Right cardiac atrium (tissue), 5 donors: ENCODE measurements at regions of chr17 and their contacts with region 1.

Region 1: DNA sequence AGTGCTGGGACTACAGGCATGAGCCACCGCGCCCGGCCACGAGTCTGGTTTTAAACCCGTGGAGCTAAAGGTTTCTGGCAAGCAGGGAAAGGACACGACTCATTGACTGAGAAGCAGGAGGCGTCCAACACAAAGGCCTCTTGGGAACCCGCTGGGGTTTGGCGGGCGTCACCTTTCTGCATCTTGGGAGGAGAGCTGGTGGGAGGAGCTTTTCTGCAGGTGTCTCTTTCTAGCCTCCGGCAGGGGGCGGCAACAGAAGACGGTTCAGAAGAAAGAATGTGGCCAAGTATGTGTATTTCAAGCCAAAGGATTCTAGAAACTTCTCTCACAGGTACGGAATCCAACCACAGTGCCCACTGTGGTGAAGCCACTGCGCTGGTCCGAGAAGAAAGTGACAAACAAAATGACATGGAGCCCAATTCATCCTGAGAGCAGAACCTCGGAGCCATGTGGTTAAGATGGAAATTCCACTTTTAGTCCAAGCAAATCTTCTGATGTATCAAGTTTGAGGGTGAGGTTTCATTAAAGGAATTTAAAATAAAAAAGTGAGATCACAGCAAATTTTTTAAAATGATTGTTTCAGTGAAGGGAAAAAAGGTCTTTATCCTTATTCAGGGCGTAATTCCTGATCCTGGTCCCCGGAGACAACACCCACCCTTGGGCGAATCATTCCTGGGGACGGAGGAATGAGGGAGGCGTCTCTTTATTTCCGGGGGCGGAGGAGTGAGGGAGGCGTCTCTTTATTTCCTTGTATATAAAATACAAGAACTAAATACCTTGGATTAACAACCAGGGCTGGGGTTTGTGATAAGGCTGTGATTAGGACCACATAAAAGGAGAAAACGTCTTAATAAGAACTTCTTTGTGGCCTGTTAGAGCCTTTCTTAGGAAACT is 97.6 kb downstream of the MRM3 start:
- DNase-seq: peak; percentile 84 to 92 (median 90)
- ATAC-seq: peak; percentile 63 to 76
- H3K4me3 ChIP-seq: no peak overlapping the region
- H3K27ac ChIP-seq: peak overlapping the region; percentile 34
- H3K4me1 ChIP-seq: peaks cover 18% of the 10 kb centered on the region
- H3K27me3 ChIP-seq: no peaks in the 10 kb centered on the region

Region 2: DNA sequence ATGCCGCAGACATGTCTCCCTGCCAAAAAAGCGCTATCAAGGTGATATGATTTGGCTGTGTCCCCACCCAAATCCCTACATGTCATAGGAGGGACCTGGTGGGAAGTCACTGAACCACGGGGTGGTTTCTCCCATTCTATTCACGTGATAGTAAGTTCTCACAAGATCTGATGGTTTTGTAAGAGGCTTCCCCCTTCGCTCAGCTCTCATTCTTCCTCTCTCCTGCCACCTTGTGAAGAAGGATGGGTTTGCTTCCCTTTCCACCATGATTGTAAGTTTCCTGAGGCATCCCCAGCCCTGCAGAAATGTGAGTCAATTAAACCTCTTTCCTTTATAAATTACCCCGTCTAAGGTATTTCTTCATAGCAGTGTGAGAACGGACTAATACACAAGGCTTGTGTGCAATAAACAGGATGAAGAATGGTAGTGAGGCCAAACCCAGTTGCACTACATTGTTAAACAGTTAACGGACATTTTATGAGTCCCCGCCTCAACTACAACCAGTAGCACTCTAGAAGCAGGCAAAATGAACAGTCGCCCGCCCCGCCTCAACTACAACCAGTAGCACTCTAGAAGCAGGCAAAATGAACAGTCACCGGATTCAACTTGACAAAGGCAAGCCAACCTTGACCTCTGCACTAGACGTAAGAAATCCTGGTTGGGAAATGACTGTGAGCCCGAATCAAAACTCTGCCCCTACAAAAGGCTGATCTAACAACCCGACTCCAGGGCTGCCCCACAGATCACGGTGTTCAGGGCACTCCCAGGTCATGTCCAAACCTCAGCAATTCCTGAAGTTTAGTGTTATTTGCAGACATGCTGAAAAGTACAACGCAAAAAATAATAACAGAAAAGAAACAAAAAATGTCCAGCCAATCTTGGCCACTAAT is 191.5 kb before region 1 on chr17:
- intact Hi-C with region 1: no loop called
- DNase-seq: no peak
- ATAC-seq: peak; percentile 42 to 47
- H3K4me3 ChIP-seq: no peak overlapping the region
- H3K27ac ChIP-seq: no peak overlapping the region
- H3K4me1 ChIP-seq: no peaks in the 10 kb centered on the region
- H3K27me3 ChIP-seq: no peaks in the 10 kb centered on the region

Region 3: DNA sequence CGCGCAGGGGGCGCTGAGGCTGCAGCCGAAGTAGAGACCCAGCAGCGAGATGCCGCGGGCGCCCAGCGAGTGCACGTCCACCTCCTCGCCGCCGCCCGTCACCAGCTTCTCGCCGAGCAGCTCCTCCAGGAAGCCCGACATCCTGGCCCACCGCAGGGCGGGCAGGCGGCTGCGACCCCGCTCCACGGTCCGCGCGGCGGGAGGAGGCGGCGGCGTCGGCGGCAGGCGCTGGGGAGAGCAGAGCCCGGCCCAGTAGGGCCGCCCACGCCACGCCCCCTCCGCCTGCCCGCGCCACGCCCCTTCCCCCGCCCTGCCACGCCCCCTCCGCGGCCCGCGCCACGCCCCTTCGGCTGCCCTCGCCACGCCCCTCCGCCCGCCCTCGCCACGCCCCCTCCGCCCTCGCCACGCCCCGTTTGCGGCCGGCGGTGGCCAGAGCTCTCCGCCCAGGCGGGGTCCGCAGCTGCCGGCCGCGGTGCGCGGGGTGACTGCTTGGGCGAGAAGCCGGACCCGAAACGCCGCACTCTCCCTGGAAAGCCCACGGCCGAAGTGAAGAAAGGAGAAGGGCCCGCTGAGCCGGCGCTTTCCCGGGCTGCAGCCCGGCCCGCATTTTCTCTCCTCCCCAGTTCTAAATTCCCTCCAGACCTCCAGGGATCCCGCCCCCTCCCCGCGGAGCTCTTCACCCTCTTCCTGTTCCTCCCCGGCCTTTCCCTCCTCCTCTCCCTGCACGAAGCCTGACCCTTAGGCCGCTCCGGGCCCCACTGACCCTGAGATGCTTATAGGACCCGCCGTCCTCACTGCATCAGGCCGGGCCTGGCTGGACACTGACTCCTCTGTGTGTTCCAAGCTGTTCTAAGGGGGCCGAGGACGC is 100.0 kb after region 1 on chr17 and contains the start of gene NXN:
- intact Hi-C with region 1: loop called in 3 of 4 experiments (anchors 2 to 5 kb)
- DNase-seq: peak; percentile 86 to 96 (median 95)
- ATAC-seq: peak; percentile 92 to 95
- H3K4me3 ChIP-seq: peak within 1 kb of the TSS; percentile 93
- H3K27ac ChIP-seq: peak within 1 kb of the TSS; percentile 31
- H3K4me1 ChIP-seq: no peaks in the 10 kb centered on the region
- H3K27me3 ChIP-seq: no peaks in the 10 kb centered on the region
- total RNA-seq, gene NXN: 14.7 to 21.8 (median 17.3) TPM

Region 4: DNA sequence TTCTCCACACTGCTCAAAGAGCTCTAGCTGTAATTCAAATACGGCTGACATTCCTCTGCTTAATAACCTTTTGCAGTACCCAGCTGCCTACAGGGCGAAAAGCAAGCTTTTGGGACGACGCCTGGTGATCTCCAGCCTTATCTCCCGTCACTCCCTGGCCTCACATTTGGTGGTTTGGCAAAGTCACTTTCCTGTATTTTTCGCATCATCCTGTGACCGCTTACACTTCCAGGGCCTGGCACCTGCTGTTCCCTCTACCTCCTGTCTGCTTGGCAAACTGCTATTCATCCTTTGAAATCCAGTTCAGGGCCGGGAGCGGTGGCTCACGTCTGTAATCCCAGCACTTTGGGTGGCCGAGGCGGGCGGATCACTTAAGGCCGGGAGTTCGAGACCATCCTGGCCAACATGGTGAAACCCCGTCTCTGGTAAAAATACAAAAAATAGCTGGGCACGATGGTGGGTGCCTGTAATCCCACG is 387.7 kb after region 1 on chr17:
- intact Hi-C with region 1: no loop called
- DNase-seq: peak in 2 of 3 donors; percentile 46 to 63
- ATAC-seq: peak; percentile 18 to 48
- H3K4me3 ChIP-seq: peak overlapping the region; percentile 77
- H3K27ac ChIP-seq: peak overlapping the region; percentile 97
- H3K4me1 ChIP-seq: no peaks in the 10 kb centered on the region
- H3K27me3 ChIP-seq: no peaks in the 10 kb centered on the region